ENCODE measurements at regions of chr16 and their contacts with region 1.

Region 1: DNA sequence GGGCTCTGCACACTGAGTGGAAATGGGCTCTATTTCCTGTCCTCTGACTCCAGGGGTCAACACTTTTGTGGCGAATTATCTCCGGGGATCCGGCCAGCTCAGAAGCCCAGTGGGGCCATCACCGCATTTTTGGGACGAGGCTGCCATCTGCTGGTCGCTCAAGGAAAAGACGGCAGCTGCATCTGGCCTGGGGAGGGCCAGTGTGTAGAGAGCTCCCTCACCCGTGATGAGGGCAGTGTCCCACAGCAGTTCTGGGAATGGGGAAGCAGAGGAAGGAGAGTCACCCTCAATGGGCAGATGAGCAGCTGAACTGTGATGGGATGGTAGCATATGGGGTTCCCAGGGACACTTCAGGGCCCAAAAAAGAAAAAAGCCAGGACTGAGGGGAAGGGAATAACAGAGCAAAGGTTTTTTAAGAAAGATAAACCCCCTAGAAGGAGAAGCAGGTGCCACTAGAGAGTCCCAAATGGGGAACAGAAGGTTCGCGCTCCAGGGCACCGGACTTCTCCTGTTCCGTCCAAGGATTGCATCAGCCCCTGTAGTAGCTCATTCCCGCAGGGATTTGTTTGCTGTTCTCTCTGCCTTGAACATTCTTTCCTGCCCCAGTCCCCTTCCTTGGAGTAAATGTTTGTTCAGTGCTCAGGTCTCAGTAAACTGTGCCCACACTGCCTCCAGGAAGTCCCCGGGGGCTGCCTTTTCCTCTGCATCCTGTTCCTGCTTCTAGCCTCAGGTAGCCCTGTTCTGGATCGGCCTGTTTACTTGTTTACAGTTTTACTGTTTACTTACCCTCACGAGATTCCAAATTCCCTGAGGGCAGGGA is 9.3 kb upstream of the ABCC12 start:
- DNase-seq: peak; percentile 34 to 80
- H3K4me3 ChIP-seq: no peak overlapping the region
- H3K27ac ChIP-seq: peak overlapping the region; percentile 55
- H3K4me1 ChIP-seq: peaks cover 13% of the 10 kb centered on the region
- H3K27me3 ChIP-seq: no peaks in the 10 kb centered on the region
- CTCF ChIP-seq: peak; percentile 96

Region 2: GRCh38 chr16:46853713-46854443 is 1311.2 kb before region 1 on chr16:
- CTCF ChIA-PET with region 1: no interaction called
- POLR2A ChIA-PET with region 1: no interaction called
- intact Hi-C with region 1: loop called (anchors 10 kb)
- DNase-seq: peak; percentile 66 to 73
- H3K4me3 ChIP-seq: no peak overlapping the region
- H3K27ac ChIP-seq: no peak overlapping the region
- H3K4me1 ChIP-seq: 0 out of 2 replicates have a peak, but pooled peaks cover 7% of the 10 kb centered on the region
- H3K27me3 ChIP-seq: no peaks in the 10 kb centered on the region
- CTCF ChIP-seq: peak; percentile 84

Region 3: DNA sequence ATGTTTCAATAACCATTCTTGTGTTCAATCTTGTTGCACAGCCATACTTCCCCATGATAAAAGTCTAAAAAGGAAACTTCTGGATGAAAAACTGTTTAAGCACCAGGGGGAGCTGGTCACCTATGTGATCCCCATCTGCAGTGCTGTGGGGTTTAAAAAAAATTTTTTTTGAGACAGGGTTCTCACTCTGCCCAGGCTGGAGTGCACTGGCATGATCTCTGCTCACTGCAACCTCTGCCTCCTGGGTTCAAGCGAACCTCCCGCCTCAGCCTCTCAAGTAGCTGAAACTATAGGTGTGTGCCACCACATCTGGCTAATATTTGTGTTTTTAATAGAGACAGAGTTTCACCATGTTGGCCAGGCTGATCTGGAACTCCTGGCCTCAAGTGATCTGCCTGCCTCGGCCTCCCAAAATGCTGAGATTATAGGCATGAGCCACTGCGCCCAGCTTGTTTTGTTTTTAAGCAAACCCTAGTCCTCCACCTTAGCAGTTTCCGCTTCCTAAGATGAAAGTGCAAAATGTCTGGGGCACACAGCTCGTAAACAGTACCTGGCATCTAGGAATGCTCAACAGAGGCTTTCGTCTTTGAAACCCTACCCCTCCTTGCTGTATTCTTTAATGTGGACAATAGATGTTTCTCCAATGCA is 1217.1 kb before region 1 on chr16:
- CTCF ChIA-PET with region 1: interaction called, 4 read pairs
- POLR2A ChIA-PET with region 1: no interaction called
- intact Hi-C with region 1: loop called (anchors 1 kb)
- DNase-seq: peak; percentile 20 to 41
- H3K4me3 ChIP-seq: no peak overlapping the region
- H3K27ac ChIP-seq: no peak overlapping the region
- H3K4me1 ChIP-seq: no peaks in the 10 kb centered on the region
- H3K27me3 ChIP-seq: no peaks in the 10 kb centered on the region
- CTCF ChIP-seq: peak; percentile 80

Region 4: DNA sequence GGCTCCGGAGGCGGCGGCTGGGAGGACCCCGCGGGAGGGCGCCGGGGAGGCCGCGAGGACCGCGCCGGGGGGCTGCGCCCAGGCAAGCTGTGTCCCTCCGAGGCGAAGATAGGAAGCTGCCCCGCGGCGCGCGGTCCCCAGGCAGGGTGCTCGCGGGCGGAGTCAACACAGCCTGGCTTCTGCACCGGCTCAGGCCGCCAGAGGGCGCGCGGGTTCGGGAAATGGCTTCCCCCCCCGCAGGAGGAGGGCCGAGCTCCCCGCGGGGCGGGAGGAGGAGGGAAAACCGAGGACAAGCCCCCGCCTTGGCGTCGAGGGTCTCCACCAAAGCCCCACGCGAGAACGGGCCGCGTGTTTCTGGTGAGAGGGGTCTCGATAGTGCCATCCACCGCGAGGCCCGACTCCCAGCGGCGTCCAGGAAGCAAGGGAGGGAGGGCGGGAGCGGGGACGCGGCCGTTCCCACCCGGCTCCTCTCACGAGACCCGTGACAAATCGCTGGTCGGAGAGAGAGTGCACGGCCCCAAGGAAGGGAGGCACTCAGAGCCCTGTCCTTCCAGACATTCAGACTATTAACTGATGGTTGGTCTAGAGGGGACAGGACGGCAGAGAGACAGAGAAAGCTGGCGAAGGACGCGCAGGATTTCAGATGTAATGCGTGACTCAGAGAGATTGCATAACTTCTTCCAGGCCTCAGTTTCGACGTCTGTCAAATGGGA is 1127.2 kb before region 1 on chr16:
- CTCF ChIA-PET with region 1: interaction called, 16 read pairs
- POLR2A ChIA-PET with region 1: no interaction called
- intact Hi-C with region 1: loop called (anchors 2 kb)
- DNase-seq: peak; percentile 50 to 89
- H3K4me3 ChIP-seq: peak overlapping the region; percentile 71
- H3K27ac ChIP-seq: no peak overlapping the region
- H3K4me1 ChIP-seq: no peaks in the 10 kb centered on the region
- H3K27me3 ChIP-seq: no peaks in the 10 kb centered on the region
- CTCF ChIP-seq: peak; percentile 90

Region 5: DNA sequence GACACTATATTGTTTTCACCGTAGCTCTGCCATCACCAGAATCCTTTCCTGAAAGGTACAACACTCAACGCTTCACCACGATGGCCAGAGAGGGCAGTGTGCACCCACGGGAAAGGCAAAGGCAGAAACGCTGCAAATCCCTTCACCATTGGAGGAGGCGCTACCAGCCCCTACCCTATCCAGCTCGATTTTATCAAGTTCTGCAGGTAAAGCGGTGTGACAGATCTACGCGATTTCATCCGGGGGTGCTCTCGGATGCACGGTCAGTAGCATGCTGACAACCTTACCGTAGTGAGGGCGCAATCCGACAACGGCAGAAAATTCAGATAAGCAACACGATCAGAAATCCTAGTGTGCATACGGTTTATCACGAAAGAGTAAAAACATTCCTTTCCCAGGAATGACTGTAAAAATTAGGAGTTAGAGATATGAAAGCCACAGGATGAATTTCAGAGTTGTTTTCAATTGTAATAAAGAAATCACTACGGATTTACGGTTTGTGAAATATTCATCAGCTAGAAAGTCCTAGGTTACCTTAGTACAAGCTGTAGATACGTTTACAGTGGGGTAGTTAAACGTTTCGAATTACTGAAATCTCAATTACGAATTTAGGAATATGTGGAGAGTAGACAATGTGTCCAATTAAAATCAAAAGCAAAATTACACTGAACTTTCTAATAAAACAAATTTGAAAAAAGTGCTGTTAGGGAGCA is 1023.2 kb before region 1 on chr16:
- CTCF ChIA-PET with region 1: interaction called, 10 read pairs
- POLR2A ChIA-PET with region 1: no interaction called
- intact Hi-C with region 1: loop called (anchors 2 kb)
- DNase-seq: peak; percentile 83 to 86
- H3K4me3 ChIP-seq: peak overlapping the region; percentile 75
- H3K27ac ChIP-seq: peak overlapping the region; percentile 17; the same call in 1 of the 2 replicates
- H3K4me1 ChIP-seq: peaks cover 25% of the 10 kb centered on the region
- H3K27me3 ChIP-seq: no peaks in the 10 kb centered on the region
- CTCF ChIP-seq: peak; percentile 90

Region 6: GRCh38 chr16:48100696-48101674 is 64.1 kb before region 1 on chr16:
- CTCF ChIA-PET with region 1: no interaction called
- POLR2A ChIA-PET with region 1: no interaction called
- intact Hi-C with region 1: no loop called
- DNase-seq: no peak
- H3K4me3 ChIP-seq: no peak overlapping the region
- H3K27ac ChIP-seq: no peak overlapping the region
- H3K4me1 ChIP-seq: no peaks in the 10 kb centered on the region
- H3K27me3 ChIP-seq: no peaks in the 10 kb centered on the region
- CTCF ChIP-seq: no peak

Region 7: DNA sequence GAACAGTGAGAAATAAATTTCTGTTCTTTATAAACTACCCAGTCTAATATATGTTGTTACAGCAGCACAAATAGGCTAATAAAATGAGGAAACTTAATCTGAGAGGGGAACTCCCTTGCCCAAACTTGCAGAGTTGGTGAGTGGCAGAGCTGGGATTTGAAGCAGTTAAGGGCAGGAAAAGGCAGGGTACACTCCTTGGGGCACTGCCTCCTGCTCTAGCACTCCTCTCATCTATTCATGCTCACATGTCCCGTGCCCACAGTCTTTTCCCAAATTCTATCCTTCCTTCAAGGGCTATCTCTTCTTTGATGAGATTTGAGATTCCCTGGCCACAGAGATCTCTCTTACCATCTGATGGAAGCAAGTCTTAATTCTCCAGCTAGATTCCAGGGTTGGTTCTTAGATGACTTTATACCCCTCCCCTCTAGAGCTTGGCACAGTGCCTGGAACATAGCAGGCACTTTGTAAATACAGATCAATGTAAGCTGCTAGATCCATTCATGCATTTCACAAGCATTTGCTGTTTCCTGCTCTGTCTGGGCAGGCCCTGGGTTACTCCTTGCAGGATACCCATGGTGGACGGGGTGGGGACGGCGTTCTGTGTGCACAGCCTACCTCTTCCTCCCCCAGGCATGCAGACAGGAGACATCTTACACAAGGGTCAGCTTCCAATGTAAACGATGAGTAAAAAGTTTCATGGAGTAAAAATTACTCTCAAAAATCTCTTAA is 29.9 kb after region 1 on chr16:
- CTCF ChIA-PET with region 1: no interaction called
- POLR2A ChIA-PET with region 1: no interaction called
- intact Hi-C with region 1: no loop called
- DNase-seq: peak; percentile 8 to 36
- H3K4me3 ChIP-seq: no peak overlapping the region
- H3K27ac ChIP-seq: no peak overlapping the region
- H3K4me1 ChIP-seq: peaks cover 5% of the 10 kb centered on the region; the same call in 1 of the 2 replicates
- H3K27me3 ChIP-seq: no peaks in the 10 kb centered on the region
- CTCF ChIP-seq: no peak

Region 8: GRCh38 chr16:48526058-48526957 is 361.2 kb after region 1 on chr16:
- CTCF ChIA-PET with region 1: no interaction called
- POLR2A ChIA-PET with region 1: no interaction called
- intact Hi-C with region 1: loop called (anchors 5 kb)
- DNase-seq: peak; percentile 71 to 74
- H3K4me3 ChIP-seq: no peak overlapping the region
- H3K27ac ChIP-seq: no peak overlapping the region
- H3K4me1 ChIP-seq: peaks cover 22% of the 10 kb centered on the region
- H3K27me3 ChIP-seq: no peaks in the 10 kb centered on the region
- CTCF ChIP-seq: peak; percentile 77

Region 9: GRCh38 chr16:48632137-48632774 is 467.1 kb after region 1 on chr16:
- CTCF ChIA-PET with region 1: no interaction called
- POLR2A ChIA-PET with region 1: no interaction called
- intact Hi-C with region 1: loop called (anchors 2 kb)
- DNase-seq: no peak
- H3K4me3 ChIP-seq: no peak overlapping the region
- H3K27ac ChIP-seq: no peak overlapping the region
- H3K4me1 ChIP-seq: no peaks in the 10 kb centered on the region
- H3K27me3 ChIP-seq: no peaks in the 10 kb centered on the region
- CTCF ChIP-seq: no peak

Measured in PC-9 (cell line).